Posterior cingulate gyrus (tissue), 11 donors: ENCODE measurements at regions of chr2 and their contacts with region 1.

Region 1: DNA sequence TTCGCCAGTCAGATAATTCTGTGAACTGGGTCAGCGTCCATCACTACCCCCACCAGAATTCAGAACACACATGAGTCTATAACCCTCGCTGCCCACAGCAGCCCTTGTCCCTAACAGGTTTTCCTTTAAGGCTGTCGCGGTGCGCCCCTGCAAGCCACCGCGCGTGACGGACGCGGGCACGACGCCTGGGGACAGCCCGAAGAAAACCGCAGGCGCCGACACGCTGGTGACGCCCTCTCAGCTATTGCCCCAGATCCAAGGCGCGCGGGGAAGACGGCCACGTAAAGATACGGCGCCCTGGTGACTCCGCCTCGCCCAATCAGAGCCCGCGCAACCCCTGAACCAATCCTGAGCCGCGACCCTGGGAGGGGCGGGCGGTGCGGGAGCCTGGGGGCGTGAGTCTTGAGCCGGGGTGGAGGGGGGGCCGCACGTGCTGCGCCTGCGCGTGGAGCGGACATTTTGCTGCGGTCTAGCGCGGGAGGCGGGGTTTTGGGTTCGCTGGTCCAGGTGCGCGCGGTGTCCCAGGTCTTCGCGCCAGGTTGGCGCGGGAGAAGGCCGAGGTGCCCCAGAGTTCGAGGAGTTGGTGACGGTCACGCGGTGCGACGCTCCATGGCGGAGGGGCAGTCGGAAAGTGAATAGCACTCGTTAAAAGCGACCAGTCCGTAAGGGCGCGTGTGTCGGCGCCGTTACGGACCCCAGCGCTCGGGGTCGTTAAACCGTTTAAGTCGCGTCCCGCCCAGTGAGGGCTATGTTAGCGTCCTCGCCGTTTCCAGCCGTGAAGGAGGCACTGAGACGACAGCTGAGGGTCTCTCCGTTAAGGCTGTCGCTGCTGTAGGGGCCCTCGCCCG is 15.9 kb downstream of the NMUR1 start:
- DNase-seq: peak; percentile 95 to 100 (median 98)

Region 2: GRCh38 chr2:231463698-231464575 is 50.4 kb before region 1 on chr2 and contains the start of gene NCL:
- intact Hi-C with region 1: loop called (anchors 2 kb)
- DNase-seq: peak in 6 of 10 donors; percentile 16 to 93 (median 88)

Region 3: DNA sequence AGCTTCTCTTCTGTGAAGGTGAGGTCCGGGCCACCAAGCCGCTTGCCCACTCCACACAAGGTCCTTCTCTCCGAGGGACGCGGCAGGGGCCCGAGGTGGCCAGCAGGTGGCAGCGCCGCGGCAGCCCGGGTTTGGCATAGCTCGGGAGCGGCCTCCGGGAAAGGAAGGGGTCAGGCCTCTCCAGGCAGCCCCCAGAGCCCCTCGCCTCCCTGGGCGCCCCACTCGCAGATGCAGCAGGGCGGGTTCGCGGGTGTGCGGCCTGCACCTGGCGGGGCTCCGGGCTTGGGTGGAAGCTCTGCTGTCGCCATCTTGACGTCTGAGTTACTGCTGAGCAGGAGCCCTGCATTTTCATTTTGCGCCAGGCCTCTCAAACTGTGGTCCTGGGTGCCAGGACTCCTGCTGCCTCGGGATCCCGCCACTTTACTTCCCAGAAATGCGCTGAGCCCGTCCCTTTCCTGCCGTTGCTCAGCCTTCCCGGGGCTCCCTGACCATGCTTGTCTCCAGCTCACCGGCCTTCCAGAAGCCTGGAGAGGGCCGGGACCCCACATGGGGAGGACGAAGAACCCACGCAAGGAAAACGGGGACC is 31.4 kb before region 1 on chr2:
- intact Hi-C with region 1: loop called (anchors 2 kb)
- DNase-seq: peak; percentile 47 to 96 (median 74)

Region 4: GRCh38 chr2:231557571-231558237 is 43.4 kb after region 1 on chr2:
- intact Hi-C with region 1: loop called (anchors 5 kb)
- DNase-seq: peak in 8 of 10 donors; percentile 24 to 89 (median 42)

Region 5: GRCh38 chr2:231604685-231605606 is 90.6 kb after region 1 on chr2:
- intact Hi-C with region 1: loop called (anchors 5 kb)
- DNase-seq: peak; percentile 100

Region 6: GRCh38 chr2:231715258-231715997 is 201.1 kb after region 1 on chr2:
- intact Hi-C with region 1: loop called (anchors 5 kb)
- DNase-seq: peak in 8 of 10 donors; percentile 70 to 91 (median 79)